ENCODE measurements at regions of chr12 and their contacts with region 1.

Region 1: DNA sequence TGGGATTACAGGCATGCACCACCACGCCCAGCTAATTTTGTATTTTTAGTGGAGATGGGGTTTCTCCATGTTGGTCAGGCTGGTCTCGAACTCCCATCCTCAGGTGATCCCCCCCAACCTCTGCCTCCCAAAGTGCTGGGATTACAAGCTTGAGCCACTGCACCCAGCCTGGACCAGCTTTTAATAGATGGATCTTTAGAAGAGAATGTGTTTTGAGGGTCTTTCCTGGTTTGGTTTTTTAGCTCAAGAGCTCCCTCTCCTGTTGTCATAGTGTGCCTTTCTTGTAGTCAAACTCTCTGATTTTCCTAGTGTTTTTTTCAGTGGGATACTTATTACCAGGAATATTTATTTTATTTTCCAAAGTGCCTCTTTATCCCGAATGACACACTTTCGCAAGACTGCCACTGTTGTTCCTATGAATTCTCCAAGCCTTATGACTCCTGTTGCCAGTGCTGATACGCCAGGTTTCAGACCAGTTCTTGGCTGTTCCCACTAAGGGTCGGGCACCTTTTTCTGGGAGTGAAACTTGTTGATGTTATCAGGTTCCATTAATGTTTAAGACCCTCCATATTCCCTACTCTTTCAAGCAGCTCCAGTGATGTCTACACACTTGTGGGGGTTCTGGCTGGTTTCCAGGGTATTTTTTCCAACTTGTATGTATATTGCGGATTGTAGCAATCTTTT is 31.5 kb upstream of the LIMA1 start:
- DNase-seq: no peak

Region 2: GRCh38 chr12:50182461-50182860 is 132.3 kb before region 1 on chr12:
- intact Hi-C with region 1: loop called (anchors 2 kb)
- DNase-seq: no peak

Region 3: GRCh38 chr12:50351120-50352043 is 36.6 kb after region 1 on chr12:
- intact Hi-C with region 1: no loop called
- DNase-seq: peak in 1 of 10 donors; percentile 66

Measured in posterior cingulate gyrus (tissue), 11 donors.